Esophagus squamous epithelium (tissue), 5 donors: ENCODE measurements at regions of chr3 and their contacts with region 1.

Region 1: GRCh38 chr3:24639481-24640329 is 145.1 kb upstream of the THRB start:
- DNase-seq: no peak
- H3K4me3 ChIP-seq: no peak overlapping the region
- H3K27ac ChIP-seq: no peak overlapping the region
- H3K4me1 ChIP-seq: peaks cover 0 to 9% (median 0%) of the 10 kb centered on the region in 3 donors
- H3K27me3 ChIP-seq: no peaks in the 10 kb centered on the region
- CTCF ChIP-seq: no peak
- POLR2A ChIP-seq: no peak

Region 2: DNA sequence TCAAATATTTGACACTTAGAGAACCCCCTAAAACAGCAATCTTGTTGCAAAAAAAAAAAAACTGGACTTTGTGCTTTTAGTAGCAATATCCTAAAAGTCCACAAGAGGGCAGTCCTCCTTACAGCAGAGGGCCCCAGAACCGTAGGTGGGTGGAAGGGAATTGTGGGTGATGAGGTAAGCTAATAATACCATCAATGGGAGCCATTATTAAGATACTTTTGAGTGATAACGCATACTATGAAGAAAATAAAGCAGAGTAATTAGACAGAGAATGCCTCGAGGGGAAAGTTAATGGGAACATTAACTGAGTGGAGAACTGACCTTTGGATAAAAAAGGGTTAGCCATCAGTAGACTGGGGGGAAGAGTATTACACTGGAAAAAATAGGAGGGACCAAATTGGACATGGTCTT is 375.0 kb before region 1 on chr3:
- intact Hi-C with region 1: loop called (anchors 10 kb)
- DNase-seq: no peak
- H3K4me3 ChIP-seq: no peak overlapping the region
- H3K27ac ChIP-seq: no peak overlapping the region
- H3K4me1 ChIP-seq: peaks cover 0 to 7% (median 0%) of the 10 kb centered on the region in 3 donors
- H3K27me3 ChIP-seq: no peaks in the 10 kb centered on the region
- CTCF ChIP-seq: peak; percentile 16 to 80 (median 70)
- POLR2A ChIP-seq: no peak